Activated B cell treated with CpG ODN at 0.5 μM for 24 hours (primary cell): ENCODE measurements at regions of chr1 and their contacts with region 1.

Region 1: GRCh38 chr1:32321712-32322291 is 14.2 kb downstream of the MARCKSL1 start:
- DNase-seq: no peak
- ATAC-seq: peak; percentile 47
- H3K4me3 Mint-ChIP-seq: peak overlapping the region; percentile 68
- H3K27ac Mint-ChIP-seq: peak overlapping the region; percentile 89
- H3K4me1 Mint-ChIP-seq: peaks cover 71% of the 10 kb centered on the region
- H3K27me3 Mint-ChIP-seq: no peaks in the 10 kb centered on the region
- CTCF ChIP-seq: no peak

Region 2: DNA sequence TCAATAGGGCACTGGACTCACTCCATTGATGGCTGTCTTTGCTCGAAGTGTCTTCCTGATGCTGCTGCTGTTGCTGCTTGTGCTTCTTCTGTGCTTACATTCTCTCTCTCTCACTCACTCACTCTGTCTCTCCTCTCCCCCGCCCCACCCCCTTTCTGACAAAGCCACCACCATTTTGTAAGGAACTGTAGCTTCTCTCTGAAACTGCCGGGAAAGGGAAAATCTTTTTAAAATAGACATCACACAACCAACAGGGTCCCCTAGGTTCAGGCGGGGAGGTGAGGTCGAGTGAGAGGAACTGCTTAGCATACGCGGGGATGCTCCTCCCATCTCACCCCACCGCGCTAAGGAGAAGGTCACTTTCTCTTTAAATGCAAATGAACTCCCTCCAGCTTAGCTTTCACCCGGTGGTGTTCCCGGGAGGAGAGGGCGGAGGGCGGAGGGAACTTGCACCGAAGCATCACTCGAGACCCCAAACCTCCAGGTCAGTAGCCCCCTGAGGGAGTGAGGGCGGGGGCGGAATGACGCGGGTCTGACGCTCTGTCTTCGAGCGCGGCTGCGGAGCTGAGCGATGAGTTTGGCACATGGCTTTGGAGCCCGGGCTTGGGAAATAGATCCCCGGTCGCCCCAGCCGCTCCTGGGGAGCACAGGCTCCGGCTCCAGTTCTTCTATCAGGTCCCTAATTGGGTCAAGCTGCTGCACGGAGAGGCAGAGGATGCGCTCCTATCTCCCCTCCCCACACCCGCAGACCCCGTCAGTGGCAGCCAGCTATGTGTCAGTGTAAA is 121.4 kb before region 1 on chr1 and contains the start of gene CCDC28B:
- CTCF ChIA-PET with region 1: interaction called, 3 read pairs
- POLR2A ChIA-PET with region 1: interaction called, 6 read pairs
- intact Hi-C with region 1: loop called (anchors 2 kb)
- DNase-seq: peak; percentile 62
- ATAC-seq: peak; percentile 51
- H3K4me3 Mint-ChIP-seq: peak within 1 kb of the TSS; percentile 87
- H3K27ac Mint-ChIP-seq: peak within 1 kb of the TSS; percentile 87
- H3K4me1 Mint-ChIP-seq: peaks cover 49% of the 10 kb centered on the region
- H3K27me3 Mint-ChIP-seq: no peaks in the 10 kb centered on the region
- CTCF ChIP-seq: no peak
- total RNA-seq, gene CCDC28B: 50.4 and 56.9 TPM in 2 replicates

Region 3: GRCh38 chr1:32240140-32240951 is 81.5 kb before region 1 on chr1:
- CTCF ChIA-PET with region 1: interaction called, 32 read pairs
- POLR2A ChIA-PET with region 1: interaction called, 54 read pairs
- intact Hi-C with region 1: no loop called
- DNase-seq: peak; percentile 68
- ATAC-seq: peak; percentile 77
- H3K4me3 Mint-ChIP-seq: peak overlapping the region; percentile 89
- H3K27ac Mint-ChIP-seq: peak overlapping the region; percentile 87
- H3K4me1 Mint-ChIP-seq: peaks cover 21% of the 10 kb centered on the region
- H3K27me3 Mint-ChIP-seq: no peaks in the 10 kb centered on the region
- CTCF ChIP-seq: no peak

Region 4: GRCh38 chr1:32307323-32307722 is 14.5 kb before region 1 on chr1:
- CTCF ChIA-PET with region 1: interaction called, 8 read pairs
- POLR2A ChIA-PET with region 1: interaction called, 10 read pairs
- intact Hi-C with region 1: loop called (anchors 2 kb)
- DNase-seq: no peak
- ATAC-seq: no peak
- H3K4me3 Mint-ChIP-seq: peak overlapping the region; percentile 60
- H3K27ac Mint-ChIP-seq: peak overlapping the region; percentile 22
- H3K4me1 Mint-ChIP-seq: peaks cover 65% of the 10 kb centered on the region
- H3K27me3 Mint-ChIP-seq: no peaks in the 10 kb centered on the region
- CTCF ChIP-seq: no peak

Region 5: DNA sequence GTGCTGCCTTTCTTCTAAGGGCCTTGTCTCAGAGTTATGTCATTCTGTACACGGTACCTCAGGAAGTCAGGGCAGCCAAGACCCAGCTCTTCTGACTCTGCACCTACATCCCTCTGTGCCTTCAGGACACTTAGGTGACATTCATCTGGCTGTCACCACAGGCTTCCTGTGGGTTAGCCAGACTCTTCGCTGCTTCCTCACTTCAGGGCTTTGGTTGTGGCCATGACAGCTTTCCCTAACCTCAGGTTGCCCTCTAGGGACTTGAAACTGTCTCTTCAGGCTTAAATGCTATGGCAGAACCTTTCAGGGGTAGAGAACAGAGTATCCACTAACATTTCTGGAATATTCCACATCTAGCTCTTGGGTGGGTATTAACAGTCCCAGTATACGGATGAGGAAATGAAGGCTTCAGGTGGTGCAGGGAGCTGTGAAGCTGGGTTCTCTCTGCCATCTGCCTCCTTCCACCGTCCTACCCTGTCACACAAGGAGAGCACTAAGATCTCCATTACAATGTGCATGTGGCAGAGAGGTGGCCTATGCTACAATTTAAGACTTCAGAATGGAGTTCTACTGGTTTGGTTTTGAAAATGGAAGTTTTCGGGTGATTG is 50.5 kb after region 1 on chr1:
- CTCF ChIA-PET with region 1: no interaction called
- POLR2A ChIA-PET with region 1: interaction called, 10 read pairs
- intact Hi-C with region 1: no loop called
- DNase-seq: no peak
- ATAC-seq: peak; percentile 80
- H3K4me3 Mint-ChIP-seq: no peak overlapping the region
- H3K27ac Mint-ChIP-seq: no peak overlapping the region
- H3K4me1 Mint-ChIP-seq: peaks cover 11% of the 10 kb centered on the region
- H3K27me3 Mint-ChIP-seq: no peaks in the 10 kb centered on the region
- CTCF ChIP-seq: no peak